SK-N-SH (cell line): ENCODE measurements at regions of chr20 and their contacts with region 1.

Region 1: DNA sequence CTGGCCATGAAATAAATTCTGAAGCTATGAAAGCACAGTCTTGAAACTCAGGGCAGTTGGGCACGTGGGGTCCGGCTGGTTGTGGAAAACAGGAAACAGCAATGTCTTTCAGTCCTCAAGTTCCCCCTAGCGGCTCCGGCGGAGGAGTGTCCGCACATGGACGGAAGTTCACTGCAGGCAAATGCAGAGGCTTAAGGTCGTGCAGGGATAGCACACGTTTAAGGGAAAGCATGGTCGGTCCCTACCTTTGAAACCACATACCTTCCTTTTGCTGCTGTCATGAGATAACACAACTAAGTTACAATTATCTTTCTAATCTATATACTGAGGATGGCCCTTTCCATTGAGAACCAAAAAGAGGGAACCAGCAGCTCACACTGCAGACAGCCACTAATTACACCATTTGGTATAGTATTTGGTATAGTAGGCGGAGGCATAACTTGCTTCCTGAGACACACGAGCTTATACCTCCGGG is 52.6 kb upstream of the NFATC2 start:
- DNase-seq: peak; percentile 83
- H3K4me3 ChIP-seq: no peak overlapping the region; a peak in 1 of 4 replicates
- H3K27ac ChIP-seq: peak overlapping the region in 1 of 2 experiments; percentile 50; a peak in 1 of 4 replicates
- H3K4me1 ChIP-seq: peaks cover 6 to 12% of the 10 kb centered on the region in 2 experiments; a peak in 2 of 4 replicates
- H3K27me3 ChIP-seq: no peaks in the 10 kb centered on the region
- CTCF ChIP-seq: peak; percentile 90
- EP300 ChIP-seq: no peak
- RAD21 ChIP-seq: peak; percentile 96

Region 2: DNA sequence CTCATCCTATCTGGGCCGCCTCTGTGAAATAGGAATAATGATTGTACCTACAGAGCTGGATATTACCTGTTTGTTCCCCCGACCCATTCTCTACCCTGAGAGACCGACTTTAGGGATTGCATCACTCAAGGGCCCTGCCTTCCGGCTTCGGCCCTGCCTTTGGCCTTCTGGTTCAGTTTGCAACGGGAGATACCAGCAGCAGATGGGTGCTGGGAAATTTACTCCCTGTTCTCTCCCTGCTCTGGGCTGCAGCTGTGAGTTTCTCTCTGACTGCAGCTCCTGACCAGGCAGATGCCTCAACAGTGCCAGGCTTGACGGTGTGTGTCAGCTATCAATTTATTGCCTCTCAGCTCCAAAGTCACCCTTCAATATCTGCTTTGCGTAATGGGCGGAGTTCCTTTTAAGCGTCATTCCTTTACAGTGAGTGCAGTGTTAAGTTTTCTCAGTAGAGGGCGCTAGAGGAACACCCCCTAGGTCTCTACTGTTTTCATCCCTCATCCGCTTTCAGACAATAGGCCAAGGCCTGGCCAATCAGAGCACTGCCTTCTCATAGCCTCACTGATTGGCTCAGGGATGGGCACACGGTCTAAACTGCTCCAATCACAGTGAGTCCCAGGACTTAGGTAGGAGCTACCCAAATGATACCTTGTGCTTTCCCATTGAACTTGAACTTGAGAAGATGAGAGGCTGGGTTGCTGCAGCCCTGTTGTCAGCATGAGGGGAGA is 602.2 kb before region 1 on chr20:
- CTCF ChIA-PET with region 1: interaction called, 31 read pairs
- POLR2A ChIA-PET with region 1: no interaction called
- DNase-seq: peak; percentile 83
- H3K4me3 ChIP-seq: no peak overlapping the region; a peak in 1 of 4 replicates
- H3K27ac ChIP-seq: no peak overlapping the region
- H3K4me1 ChIP-seq: no peaks in the 10 kb centered on the region
- H3K27me3 ChIP-seq: no peaks in the 10 kb centered on the region
- CTCF ChIP-seq: peak; percentile 67
- EP300 ChIP-seq: no peak
- RAD21 ChIP-seq: peak; percentile 79

Region 3: GRCh38 chr20:51366155-51366886 is 228.8 kb before region 1 on chr20:
- CTCF ChIA-PET with region 1: interaction called, 95 read pairs
- POLR2A ChIA-PET with region 1: no interaction called
- DNase-seq: no peak
- H3K4me3 ChIP-seq: no peak overlapping the region
- H3K27ac ChIP-seq: peak overlapping the region; percentile 58 to 100; a peak in 3 of 4 replicates
- H3K4me1 ChIP-seq: peaks cover 4 to 23% of the 10 kb centered on the region in 2 experiments; a peak in 3 of 4 replicates
- H3K27me3 ChIP-seq: no peaks in the 10 kb centered on the region
- CTCF ChIP-seq: no peak
- EP300 ChIP-seq: peak; percentile 2 to 96; a peak in 3 of 4 replicates
- RAD21 ChIP-seq: no peak

Region 4: DNA sequence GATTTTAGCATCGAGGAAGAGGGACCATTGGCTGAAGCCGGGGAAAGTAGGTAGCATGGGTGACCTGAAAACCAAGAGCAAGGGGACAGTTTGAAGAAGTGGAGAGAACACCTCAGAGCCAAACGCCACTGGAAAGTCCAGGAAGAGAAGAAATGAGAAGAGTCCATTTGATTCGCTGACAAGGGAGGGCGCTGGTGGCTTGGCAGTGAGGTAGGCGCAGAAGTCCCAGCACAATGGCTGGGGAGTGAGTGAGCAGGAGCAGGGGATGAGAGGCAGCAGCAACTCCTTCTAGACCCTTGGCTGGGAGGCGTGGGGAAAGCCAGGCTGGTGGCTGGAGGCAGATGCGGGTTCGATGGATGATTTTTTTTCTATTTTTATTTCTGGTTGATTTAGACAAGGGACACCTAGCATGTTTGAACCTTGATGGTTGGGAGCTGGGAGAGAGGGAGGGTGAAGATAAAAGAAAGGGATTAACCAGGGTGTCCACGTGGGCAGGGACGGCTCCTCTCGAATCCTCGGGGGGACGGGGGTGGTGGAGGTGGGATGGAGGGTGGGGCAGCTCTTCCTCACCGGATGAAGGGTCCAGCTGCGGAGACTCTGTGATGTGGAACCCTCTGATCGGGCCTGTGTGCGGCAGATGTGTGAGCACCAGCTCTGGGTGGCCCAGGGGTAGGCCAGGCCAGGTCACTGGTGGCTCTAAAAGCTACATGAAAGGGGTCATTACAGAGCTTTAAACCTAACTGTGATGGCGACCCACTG is 216.7 kb before region 1 on chr20:
- CTCF ChIA-PET with region 1: interaction called, 95 read pairs
- POLR2A ChIA-PET with region 1: no interaction called
- DNase-seq: no peak
- H3K4me3 ChIP-seq: no peak overlapping the region
- H3K27ac ChIP-seq: no peak overlapping the region
- H3K4me1 ChIP-seq: peaks cover 0 to 19% of the 10 kb centered on the region in 2 experiments; a peak in 2 of 4 replicates
- H3K27me3 ChIP-seq: no peaks in the 10 kb centered on the region
- CTCF ChIP-seq: peak; percentile 31
- EP300 ChIP-seq: no peak
- RAD21 ChIP-seq: peak; percentile 51

Region 5: DNA sequence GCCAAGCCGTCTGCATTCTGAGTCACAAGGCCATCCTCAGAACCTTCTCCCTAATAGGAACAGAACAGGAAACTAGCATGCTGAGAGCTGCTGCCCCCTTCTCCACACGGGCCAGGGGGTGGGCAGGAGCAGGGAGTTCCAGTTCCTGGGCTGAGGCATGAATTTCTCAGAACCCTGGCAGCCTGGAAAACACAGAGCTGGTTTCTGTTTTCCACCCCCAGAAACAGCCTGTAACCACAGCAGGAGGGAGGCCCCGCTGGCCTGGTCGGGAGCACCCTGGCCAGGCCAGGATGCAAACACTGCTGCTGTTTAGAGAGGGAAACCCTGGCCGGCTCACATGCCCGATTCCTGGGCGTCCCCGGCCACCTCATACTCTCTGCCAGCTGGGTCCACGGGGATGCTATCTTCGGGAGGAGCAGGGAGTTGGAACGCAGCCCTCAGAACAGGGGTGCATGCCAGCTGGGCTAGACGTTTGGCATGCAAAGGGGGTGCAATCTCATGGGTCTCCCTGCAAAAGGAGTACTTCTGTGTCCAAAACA is 182.7 kb before region 1 on chr20:
- CTCF ChIA-PET with region 1: interaction called, 27 read pairs
- POLR2A ChIA-PET with region 1: interaction called, 3 read pairs
- DNase-seq: peak; percentile 74
- H3K4me3 ChIP-seq: no peak overlapping the region
- H3K27ac ChIP-seq: peak overlapping the region; percentile 72 to 93
- H3K4me1 ChIP-seq: peaks cover 9 to 17% of the 10 kb centered on the region in 2 experiments; a peak in 2 of 4 replicates
- H3K27me3 ChIP-seq: no peaks in the 10 kb centered on the region
- CTCF ChIP-seq: no peak
- EP300 ChIP-seq: no peak
- RAD21 ChIP-seq: no peak

Region 6: GRCh38 chr20:51624157-51624731 is 29.1 kb after region 1 on chr20:
- CTCF ChIA-PET with region 1: interaction called, 28 read pairs
- POLR2A ChIA-PET with region 1: no interaction called
- DNase-seq: peak; percentile 77
- H3K4me3 ChIP-seq: no peak overlapping the region
- H3K27ac ChIP-seq: no peak overlapping the region
- H3K4me1 ChIP-seq: 0 out of 4 replicates have a peak, but pooled peaks cover 0 to 4% of the 10 kb centered on the region in 2 experiments
- H3K27me3 ChIP-seq: no peaks in the 10 kb centered on the region
- CTCF ChIP-seq: peak; percentile 73
- EP300 ChIP-seq: no peak
- RAD21 ChIP-seq: peak; percentile 65